Astrocyte of the cerebellum (primary cell): ENCODE measurements at regions of chr20 and their contacts with region 1.

Region 1: GRCh38 chr20:43994486-43995100 is 79.9 kb downstream of the TOX2 start:
- DNase-seq: no peak
- H3K4me3 ChIP-seq: no peak overlapping the region
- CTCF ChIP-seq: no peak

Region 2: DNA sequence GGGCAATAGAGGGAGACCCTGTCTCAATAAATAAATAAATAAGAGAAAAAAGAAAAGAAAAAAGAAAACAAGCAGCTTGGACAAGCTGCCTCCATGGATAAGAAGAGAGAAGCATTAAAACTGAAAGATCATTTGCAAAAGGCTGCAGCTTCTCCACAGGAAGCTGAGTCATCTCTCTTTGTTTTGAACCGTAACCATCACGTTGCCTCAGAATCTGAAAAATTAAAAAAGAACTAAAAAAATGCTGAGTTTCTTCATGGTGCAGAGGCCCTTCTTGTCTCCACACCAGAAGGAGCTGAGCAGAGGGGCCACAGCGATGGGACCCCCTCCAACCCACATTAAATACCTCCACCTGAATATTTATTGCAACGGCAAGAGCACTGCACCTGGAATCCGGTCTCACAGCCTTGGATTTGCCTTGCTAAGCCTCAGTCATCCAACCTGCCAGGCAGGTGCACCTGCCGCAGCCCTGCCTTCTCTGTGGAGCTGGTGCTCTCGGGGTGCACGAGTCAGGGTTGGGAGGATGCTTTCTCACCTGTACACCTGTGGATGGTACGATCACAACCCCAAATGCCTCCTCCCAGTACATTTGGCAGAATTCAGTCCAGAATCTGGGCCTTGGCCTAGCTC is 51.8 kb before region 1 on chr20:
- in situ Hi-C with region 1: loop called (anchors 5 kb)
- DNase-seq: peak; percentile 64
- H3K4me3 ChIP-seq: no peak overlapping the region
- CTCF ChIP-seq: no peak

Region 3: GRCh38 chr20:44028868-44029847 is 34.6 kb after region 1 on chr20:
- in situ Hi-C with region 1: loop called (anchors 5 kb)
- DNase-seq: no peak
- H3K4me3 ChIP-seq: no peak overlapping the region
- CTCF ChIP-seq: no peak